Colonic mucosa (tissue), 4 donors: ENCODE measurements at regions of chr14 and their contacts with region 1.

Region 1: GRCh38 chr14:65412032-65412846 is at the start of gene FUT8:
- DNase-seq: peak; percentile 96
- H3K4me3 ChIP-seq: peak within 1 kb of the TSS; percentile 92
- H3K27ac ChIP-seq: peak within 1 kb of the TSS; percentile 98
- H3K4me1 ChIP-seq: no peaks in the 10 kb centered on the region
- H3K27me3 ChIP-seq: no peaks in the 10 kb centered on the region
- CTCF ChIP-seq: peak; percentile 46
- total RNA-seq, gene FUT8: 28.8 to 37.2 TPM

Region 2: DNA sequence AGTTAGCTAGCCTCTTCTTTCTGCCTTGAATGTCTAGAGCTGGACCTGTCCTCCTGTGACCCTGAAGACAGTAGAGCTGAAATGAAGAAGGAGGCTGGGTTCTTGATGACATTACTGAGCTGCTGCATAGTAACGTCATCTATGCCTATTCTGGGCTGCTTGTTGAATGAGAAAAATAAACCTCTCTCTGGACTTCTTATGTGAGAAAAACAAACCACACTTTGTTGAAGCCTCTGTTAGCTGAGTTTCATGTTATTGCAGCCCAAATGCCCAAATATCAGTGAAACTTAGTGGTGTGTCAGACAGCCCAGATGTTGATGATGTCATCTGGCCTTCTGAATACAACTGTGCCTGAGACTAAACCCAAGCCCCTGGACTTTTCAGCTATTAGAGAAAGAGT is 242.9 kb before region 1 on chr14:
- intact Hi-C with region 1: loop called (anchors 5 kb)
- DNase-seq: no peak
- H3K4me3 ChIP-seq: no peak overlapping the region
- H3K27ac ChIP-seq: no peak overlapping the region
- H3K4me1 ChIP-seq: no peaks in the 10 kb centered on the region
- H3K27me3 ChIP-seq: no peaks in the 10 kb centered on the region
- CTCF ChIP-seq: no peak

Region 3: DNA sequence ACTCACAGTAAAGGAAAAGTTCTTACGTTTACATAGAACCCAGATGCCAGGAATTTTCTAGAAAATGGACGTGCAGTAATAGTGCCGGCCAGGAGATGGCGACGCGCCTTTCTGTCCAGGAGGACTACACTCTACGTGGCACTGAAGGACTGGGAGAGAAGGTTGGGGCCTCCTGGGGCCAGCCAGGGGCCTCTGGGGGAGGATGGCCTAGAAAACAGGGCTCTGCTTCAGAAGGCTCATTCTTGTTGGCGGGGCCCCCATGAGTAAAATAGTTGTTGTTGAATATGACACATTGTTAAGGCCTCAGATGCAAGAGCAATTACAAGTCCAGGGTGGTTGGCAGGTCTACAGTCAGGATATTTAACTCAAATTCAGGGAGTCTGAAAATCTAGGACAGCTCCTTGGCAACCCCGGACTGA is 189.8 kb before region 1 on chr14:
- intact Hi-C with region 1: loop called (anchors 5 kb)
- DNase-seq: peak; percentile 77
- H3K4me3 ChIP-seq: no peak overlapping the region
- H3K27ac ChIP-seq: no peak overlapping the region
- H3K4me1 ChIP-seq: no peaks in the 10 kb centered on the region
- H3K27me3 ChIP-seq: no peaks in the 10 kb centered on the region
- CTCF ChIP-seq: peak; percentile 86

Region 4: DNA sequence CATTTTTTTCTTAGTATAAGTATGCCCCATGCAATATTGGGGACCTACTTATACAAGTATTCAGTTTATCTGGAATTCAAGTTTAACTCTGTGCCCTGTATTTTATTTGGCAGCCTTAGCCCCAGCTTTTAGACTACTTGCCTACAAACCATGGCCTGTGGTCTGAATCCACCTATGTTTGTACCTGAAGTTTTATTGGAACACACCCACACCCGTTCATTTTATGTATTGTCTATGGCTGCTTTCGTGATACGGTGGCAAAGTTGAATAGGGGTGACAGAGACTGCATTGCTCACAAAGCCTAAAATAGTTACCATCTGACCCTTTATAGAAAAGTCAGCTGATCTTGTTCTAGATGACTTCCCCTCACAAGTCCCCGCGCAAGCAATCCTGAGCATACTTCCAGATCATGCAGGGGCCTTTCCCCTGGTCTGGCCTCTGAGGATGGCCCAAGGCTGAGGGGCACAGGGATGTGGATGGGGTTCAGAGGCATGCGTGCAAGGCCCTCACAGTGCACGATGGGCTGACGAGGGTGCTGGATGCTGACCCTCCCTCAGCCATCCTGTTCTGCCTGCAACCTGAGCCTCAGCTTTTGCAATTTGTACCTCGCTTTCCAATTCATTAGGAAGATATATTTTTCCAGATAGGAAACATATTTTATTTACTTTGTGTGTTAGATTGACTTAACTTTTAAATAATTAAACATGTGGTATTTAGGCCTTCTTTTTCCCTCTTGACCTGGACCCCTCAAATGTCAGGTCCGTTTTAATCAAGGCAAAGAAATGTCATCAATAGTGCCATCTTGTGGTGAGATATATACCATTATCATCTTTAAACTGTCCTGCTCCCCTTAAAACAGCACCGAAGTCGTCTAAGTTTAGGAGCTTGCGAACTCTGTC is 546.7 kb after region 1 on chr14:
- intact Hi-C with region 1: loop called (anchors 5 kb)
- DNase-seq: peak; percentile 22
- H3K4me3 ChIP-seq: no peak overlapping the region
- H3K27ac ChIP-seq: no peak overlapping the region
- H3K4me1 ChIP-seq: no peaks in the 10 kb centered on the region
- H3K27me3 ChIP-seq: no peaks in the 10 kb centered on the region
- CTCF ChIP-seq: peak; percentile 33

Region 5: DNA sequence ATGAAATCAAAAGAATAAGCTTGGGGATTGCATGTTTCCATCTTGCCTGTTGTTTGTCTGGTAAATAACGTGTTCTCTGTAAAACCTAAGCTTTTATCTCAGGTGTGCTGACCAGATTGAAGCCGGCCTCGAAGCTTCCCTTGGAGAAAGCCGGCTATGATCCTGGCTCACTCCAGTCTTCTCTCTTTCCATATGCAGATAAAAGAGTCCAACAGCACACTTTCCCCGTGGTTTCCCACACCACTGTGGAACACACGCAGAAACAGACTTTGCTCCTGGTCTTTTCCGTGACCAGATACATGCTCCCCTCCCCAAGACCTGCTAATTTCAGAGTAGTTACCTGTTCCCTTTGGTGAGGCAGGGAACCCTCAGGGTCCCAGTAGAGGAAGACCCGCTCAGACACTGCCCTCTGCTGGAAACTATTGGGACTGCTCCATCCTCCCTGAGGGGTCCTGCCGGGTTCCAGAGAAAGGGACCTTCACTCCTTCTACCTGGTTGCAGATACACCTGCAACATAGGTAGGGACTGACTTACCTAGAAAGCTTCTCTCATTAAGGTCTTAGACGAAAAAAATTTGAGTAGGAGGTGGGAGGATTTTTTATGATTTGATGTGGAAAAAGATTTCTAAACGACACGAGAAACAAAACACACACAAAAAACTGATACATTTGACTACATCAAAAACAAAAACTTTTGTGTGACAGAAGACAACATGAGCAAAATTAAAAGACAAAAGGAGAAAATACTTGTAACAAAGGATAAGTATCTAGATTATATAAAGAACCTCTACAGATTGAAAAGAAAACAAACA is 658.5 kb after region 1 on chr14:
- intact Hi-C with region 1: loop called (anchors 10 kb)
- DNase-seq: peak; percentile 70
- H3K4me3 ChIP-seq: no peak overlapping the region
- H3K27ac ChIP-seq: no peak overlapping the region
- H3K4me1 ChIP-seq: no peaks in the 10 kb centered on the region
- H3K27me3 ChIP-seq: no peaks in the 10 kb centered on the region
- CTCF ChIP-seq: peak; percentile 84